ENCODE measurements at regions of chr1 and their contacts with region 1.

Region 1: GRCh38 chr1:85109475-85109874 is 61.2 kb upstream of the MCOLN3 start:
- DNase-seq: peak; percentile 35
- H3K4me3 ChIP-seq: no peak overlapping the region
- H3K27ac ChIP-seq: no peak overlapping the region
- H3K4me1 ChIP-seq: no peaks in the 10 kb centered on the region
- H3K27me3 ChIP-seq: no peaks in the 10 kb centered on the region
- CTCF ChIP-seq: peak; percentile 87 to 95

Region 2: GRCh38 chr1:85153149-85153891 is 43.8 kb after region 1 on chr1:
- CTCF ChIA-PET with region 1: no interaction called
- dilution Hi-C with region 1: no loop called
- in situ Hi-C with region 1: no loop called
- intact Hi-C with region 1: no loop called
- DNase-seq: no peak
- H3K4me3 ChIP-seq: no peak overlapping the region
- H3K27ac ChIP-seq: no peak overlapping the region
- H3K4me1 ChIP-seq: no peaks in the 10 kb centered on the region
- H3K27me3 ChIP-seq: no peaks in the 10 kb centered on the region
- CTCF ChIP-seq: no peak

Region 3: GRCh38 chr1:85240174-85240601 is 130.7 kb after region 1 on chr1:
- CTCF ChIA-PET with region 1: interaction called, 21 read pairs
- dilution Hi-C with region 1: no loop called
- in situ Hi-C with region 1: loop called (anchors 5 kb)
- intact Hi-C with region 1: loop called (anchors 1 kb)
- DNase-seq: no peak
- H3K4me3 ChIP-seq: no peak overlapping the region
- H3K27ac ChIP-seq: no peak overlapping the region
- H3K4me1 ChIP-seq: peaks cover 9% of the 10 kb centered on the region
- H3K27me3 ChIP-seq: no peaks in the 10 kb centered on the region
- CTCF ChIP-seq: peak; percentile 24 to 55

Region 4: GRCh38 chr1:85259118-85259911 is 149.8 kb after region 1 on chr1 and contains the start of gene C1orf52:
- CTCF ChIA-PET with region 1: interaction called, 3 read pairs
- dilution Hi-C with region 1: no loop called
- in situ Hi-C with region 1: no loop called
- intact Hi-C with region 1: loop called (anchors 1 kb)
- DNase-seq: peak; percentile 81
- H3K4me3 ChIP-seq: peak within 1 kb of the TSS; percentile 74 to 96 (median 96)
- H3K27ac ChIP-seq: peak within 1 kb of the TSS; percentile 72
- H3K4me1 ChIP-seq: peaks cover 4% of the 10 kb centered on the region
- H3K27me3 ChIP-seq: no peaks in the 10 kb centered on the region
- CTCF ChIP-seq: peak; percentile 71 to 92
- total RNA-seq, gene C1orf52: 13.7 to 25.7 TPM

Region 5: DNA sequence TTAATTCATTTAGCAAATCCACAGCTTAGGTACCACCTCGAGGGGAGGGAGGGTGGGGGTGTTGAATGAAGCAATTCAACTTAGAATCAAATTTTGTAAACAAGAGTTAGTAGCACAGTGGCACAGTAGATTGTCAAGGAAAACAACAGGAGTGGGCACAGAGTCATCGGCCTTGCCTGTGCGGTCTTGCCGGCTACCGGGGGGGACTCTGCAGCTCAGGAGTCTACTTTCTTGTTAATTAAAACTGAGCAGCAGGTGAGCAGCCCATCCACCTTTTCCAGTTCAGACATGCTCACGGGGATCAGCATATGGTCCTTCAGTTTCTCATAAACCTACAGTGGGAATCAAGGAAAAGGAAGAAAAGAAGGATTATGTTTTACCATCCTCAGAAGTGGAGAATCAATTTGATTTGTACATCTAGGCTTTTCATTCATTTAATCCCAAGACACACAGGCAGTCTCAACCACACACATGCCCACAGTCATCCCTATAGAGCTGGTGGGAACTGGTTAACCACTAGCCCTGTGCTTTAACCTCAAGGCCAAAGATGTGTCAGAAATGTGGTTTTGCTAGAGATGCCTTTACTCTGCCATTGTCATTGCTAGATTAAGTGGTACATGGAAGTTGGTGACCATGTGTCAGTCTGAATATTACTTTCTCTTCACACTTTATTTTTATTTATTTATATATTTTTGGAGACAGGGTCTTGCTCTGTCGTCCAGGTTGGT is 211.9 kb after region 1 on chr1:
- CTCF ChIA-PET with region 1: no interaction called
- dilution Hi-C with region 1: no loop called
- in situ Hi-C with region 1: no loop called
- intact Hi-C with region 1: no loop called
- DNase-seq: peak; percentile 85
- H3K4me3 ChIP-seq: no peak overlapping the region
- H3K27ac ChIP-seq: peak overlapping the region; percentile 30
- H3K4me1 ChIP-seq: peaks cover 54% of the 10 kb centered on the region
- H3K27me3 ChIP-seq: no peaks in the 10 kb centered on the region
- CTCF ChIP-seq: no peak